A549 (cell line): ENCODE measurements at regions of chr1 and their contacts with region 1.

Region 1: GRCh38 chr1:16139473-16139962 is 16.4 kb downstream of the EPHA2 start:
- DNase-seq: peak in 1 of 2 experiments; percentile 57
- ATAC-seq: peak in 1 of 2 experiments; percentile 1; a peak in 2 of 6 replicates
- H3K4me3 ChIP-seq: peak overlapping the region; percentile 13; the same call in 1 of the 3 replicates
- H3K27ac ChIP-seq: peak overlapping the region; percentile 95 to 100
- H3K4me1 ChIP-seq: peaks cover 67% of the 10 kb centered on the region
- CTCF ChIP-seq: no peak
- EP300 ChIP-seq: 0 out of 5 replicates have a peak, but pooled peaks of 1 of the 2 experiments have one; percentile 15
- POLR2A ChIP-seq: no peak
- RAD21 ChIP-seq: no peak

Region 2: DNA sequence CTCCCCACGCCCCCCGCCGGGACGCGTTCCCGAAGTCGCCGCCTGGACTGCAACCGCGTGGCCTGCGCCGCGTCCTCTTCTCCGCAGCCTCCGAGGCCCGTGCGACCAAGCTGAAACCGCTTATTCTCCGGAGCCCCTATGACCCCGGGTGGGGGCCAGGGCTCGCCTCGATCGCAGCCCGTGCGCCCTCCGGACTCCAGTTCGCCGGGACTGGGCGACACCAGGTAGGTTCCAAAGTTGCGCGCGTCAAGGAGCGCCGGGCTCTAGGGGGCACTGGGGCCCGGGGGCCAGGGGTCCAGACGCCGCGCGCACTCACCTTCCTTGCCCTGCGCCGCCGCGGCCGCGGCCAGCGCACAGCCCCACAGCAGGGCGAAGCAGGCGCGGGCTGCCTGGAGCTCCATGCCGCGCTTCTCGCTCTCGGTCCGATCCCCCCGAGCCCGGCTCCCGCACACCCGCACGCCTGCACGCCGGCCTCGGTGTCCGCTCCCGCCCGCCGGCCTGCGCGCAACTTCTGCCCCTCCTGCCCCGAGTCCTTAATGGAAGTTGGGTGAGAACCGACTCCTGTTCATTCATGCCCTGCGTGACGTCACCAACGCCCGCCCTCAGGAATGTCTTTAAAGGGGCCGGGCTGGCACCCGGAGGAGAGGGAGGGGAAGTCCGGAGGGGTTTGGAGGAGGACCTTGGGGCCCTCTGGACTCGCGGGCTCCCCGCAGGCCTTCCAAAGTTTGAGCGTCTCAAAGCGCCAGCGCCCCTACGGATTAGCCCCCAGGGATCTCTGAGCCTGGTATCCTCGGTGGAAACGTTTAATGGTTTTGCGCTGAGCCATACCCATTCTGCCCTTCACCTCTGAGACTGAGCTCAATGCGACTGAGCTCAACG is 16.3 kb after region 1 on chr1 and contains the start of gene EPHA2:
- CTCF ChIA-PET with region 1: interaction called, 15 read pairs
- POLR2A ChIA-PET with region 1: interaction called, 24 read pairs
- DNase-seq: peak; percentile 79 to 91
- ATAC-seq: peak; percentile 76 to 84
- H3K4me3 ChIP-seq: peak within 1 kb of the TSS; percentile 93
- H3K27ac ChIP-seq: peak within 1 kb of the TSS; percentile 97 to 100
- H3K4me1 ChIP-seq: peaks cover 44% of the 10 kb centered on the region
- CTCF ChIP-seq: no peak
- EP300 ChIP-seq: no peak
- POLR2A ChIP-seq: peak; percentile 93
- RAD21 ChIP-seq: peak in 1 of 2 experiments; percentile 16; a peak in 1 of 5 replicates
- polyA plus RNA-seq, gene EPHA2: 55.0 and 59.3 TPM in 2 replicates